Endothelial cell of umbilical vein (primary cell): ENCODE measurements at regions of chr5 and their contacts with region 1.

Region 1: GRCh38 chr5:73498057-73499008 is at the start of gene BTF3:
- DNase-seq: peak; percentile 96
- H3K4me3 ChIP-seq: peak within 1 kb of the TSS; percentile 84 to 95 (median 91)
- H3K27ac ChIP-seq: peak within 1 kb of the TSS; percentile 92
- H3K4me1 ChIP-seq: peaks cover 32% of the 10 kb centered on the region
- H3K27me3 ChIP-seq: peaks cover 2 to 4% of the 10 kb centered on the region in 2 experiments
- CTCF ChIP-seq: no peak
- POLR2A ChIP-seq: peak; percentile 88
- total RNA-seq, gene BTF3: 632 and 637 TPM in 2 replicates

Region 2: DNA sequence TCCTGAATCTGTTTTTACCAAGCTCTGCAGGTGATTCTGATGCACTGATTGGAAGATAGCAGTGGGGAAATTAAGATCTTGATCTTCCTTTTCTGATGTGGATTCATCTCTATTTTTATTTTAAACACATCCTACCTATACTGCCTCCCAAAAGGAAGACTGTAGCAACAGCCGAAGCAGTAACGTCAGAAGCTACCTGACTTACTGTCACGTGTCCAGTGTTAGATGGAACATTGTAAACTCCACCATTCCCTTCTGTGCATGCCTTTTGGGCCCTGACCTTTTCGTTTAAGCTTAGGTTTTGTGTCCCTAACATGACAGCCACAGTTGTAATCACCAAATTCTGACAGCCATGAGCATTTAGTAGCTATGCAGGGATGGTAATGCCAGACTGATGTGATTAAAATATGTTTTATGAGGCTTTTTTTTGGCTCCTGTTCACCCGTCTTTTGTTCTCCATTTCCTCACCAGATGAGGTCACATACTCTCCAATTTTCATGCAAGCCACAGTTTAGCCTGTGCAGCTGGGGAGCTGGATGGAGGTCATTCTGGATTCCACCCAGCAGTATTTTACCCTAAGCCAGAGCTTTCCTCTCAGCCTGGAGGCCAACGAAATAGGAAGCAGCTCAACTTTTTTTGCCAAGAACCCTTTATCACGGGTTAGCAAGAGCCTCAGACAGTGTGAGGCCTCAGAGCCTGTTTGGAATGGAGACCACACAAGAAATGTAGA is 34.2 kb before region 1 on chr5:
- CTCF ChIA-PET with region 1: interaction called, 6 read pairs
- POLR2A ChIA-PET with region 1: no interaction called
- dilution Hi-C with region 1: no loop called
- intact Hi-C with region 1: loop called (anchors 1 kb)
- DNase-seq: peak; percentile 94
- H3K4me3 ChIP-seq: no peak overlapping the region
- H3K27ac ChIP-seq: no peak overlapping the region
- H3K4me1 ChIP-seq: no peaks in the 10 kb centered on the region
- H3K27me3 ChIP-seq: peaks cover 37 to 53% of the 10 kb centered on the region in 2 experiments
- CTCF ChIP-seq: no peak
- POLR2A ChIP-seq: no peak

Region 3: DNA sequence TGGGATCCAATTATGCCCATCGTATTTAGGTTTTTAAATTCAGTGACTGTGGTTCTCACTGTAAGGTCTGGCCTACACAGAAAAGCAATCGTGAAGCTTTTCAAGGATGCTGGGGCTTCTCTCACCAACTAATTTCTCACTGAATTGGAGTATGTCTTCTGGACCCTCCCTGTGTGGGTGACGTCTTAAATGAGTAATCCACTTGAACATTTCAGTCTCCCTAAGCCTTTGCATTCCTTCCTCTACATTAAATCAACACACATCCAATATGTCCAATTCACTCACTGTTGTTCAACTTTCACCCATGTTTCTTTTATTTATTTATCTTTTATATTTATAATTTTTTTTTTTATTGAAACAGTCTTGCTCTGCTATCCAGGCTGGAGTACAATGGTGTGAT is 12.6 kb before region 1 on chr5:
- CTCF ChIA-PET with region 1: interaction called, 13 read pairs
- POLR2A ChIA-PET with region 1: no interaction called
- dilution Hi-C with region 1: no loop called
- intact Hi-C with region 1: no loop called
- DNase-seq: no peak
- H3K4me3 ChIP-seq: no peak overlapping the region
- H3K27ac ChIP-seq: no peak overlapping the region
- H3K4me1 ChIP-seq: no peaks in the 10 kb centered on the region
- H3K27me3 ChIP-seq: peaks cover 39 to 52% of the 10 kb centered on the region in 2 experiments
- CTCF ChIP-seq: no peak
- POLR2A ChIP-seq: no peak

Region 4: DNA sequence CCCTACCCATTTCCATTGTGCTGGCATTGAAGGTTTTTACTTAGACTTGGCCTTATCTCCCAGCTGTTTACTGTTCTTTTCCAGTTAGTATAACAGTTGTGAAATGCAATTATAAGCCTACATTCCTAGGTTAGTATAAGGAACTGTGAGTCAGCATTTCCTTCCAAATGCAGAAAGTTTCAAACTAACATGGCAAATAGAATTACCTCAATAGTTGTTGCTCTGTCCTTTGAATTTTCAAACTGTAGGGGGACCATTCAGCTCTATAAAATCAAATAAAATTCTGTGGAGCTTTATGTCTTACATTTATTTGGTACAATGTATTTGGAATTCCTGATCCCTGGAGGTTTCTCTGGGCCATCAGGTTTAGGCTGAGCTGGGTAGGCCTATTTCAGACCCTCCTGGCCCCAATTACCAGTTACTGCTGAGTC is 174.8 kb after region 1 on chr5:
- CTCF ChIA-PET with region 1: no interaction called
- POLR2A ChIA-PET with region 1: no interaction called
- dilution Hi-C with region 1: no loop called
- intact Hi-C with region 1: no loop called
- DNase-seq: peak; percentile 91
- H3K4me3 ChIP-seq: no peak overlapping the region
- H3K27ac ChIP-seq: peak overlapping the region; percentile 74
- H3K4me1 ChIP-seq: peaks cover 33% of the 10 kb centered on the region
- H3K27me3 ChIP-seq: no peaks in the 10 kb centered on the region
- CTCF ChIP-seq: peak in 1 of 2 donors; percentile 6
- POLR2A ChIP-seq: no peak